ENCODE measurements at regions of chr11 and their contacts with region 1.

Region 1: DNA sequence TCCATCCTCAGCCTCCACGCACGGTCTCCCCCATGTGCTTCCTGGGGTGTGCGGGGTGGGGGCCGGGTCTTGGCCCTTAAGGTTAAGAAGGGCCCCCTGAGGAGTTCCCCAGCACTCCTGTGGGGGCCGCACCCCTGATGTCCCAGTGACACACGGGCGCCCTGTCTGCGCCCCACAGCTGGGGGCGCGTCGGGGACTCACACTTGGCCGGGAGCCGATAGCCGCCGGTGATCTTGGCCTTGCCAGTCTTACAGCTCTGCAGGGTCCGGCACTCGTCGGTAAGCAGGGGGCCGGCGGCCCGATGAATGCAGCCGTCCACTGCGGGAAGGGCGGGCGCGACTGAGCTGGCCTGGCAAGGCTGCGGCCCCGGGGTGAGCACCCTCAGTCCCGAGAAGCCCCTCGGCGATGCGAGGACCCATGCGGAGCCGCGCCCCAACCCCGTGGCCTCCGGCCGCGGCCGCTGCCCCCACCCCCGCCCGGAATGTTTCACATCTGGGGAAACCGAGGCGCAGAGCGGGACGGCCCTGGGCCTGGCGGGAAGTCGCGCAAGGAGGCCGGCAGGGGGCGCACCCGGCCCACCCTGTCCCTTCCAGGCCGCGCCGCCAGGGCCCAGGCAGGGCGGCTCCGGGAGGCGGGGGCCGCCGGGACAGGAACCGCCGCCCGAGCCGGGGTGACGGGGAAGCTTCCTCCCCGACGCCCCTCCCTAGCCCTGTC is 13.9 kb downstream of the OTUB1 start:
- DNase-seq: peak; percentile 62 to 85 (median 77)
- H3K4me3 ChIP-seq: peak overlapping the region; percentile 25
- H3K27ac ChIP-seq: no peak overlapping the region
- H3K4me1 ChIP-seq: peaks cover 8% of the 10 kb centered on the region
- H3K27me3 ChIP-seq: no peaks in the 10 kb centered on the region
- CTCF ChIP-seq: peak; percentile 57 to 94 (median 94)
- EP300 ChIP-seq: no peak
- POLR2A ChIP-seq: no peak

Region 2: DNA sequence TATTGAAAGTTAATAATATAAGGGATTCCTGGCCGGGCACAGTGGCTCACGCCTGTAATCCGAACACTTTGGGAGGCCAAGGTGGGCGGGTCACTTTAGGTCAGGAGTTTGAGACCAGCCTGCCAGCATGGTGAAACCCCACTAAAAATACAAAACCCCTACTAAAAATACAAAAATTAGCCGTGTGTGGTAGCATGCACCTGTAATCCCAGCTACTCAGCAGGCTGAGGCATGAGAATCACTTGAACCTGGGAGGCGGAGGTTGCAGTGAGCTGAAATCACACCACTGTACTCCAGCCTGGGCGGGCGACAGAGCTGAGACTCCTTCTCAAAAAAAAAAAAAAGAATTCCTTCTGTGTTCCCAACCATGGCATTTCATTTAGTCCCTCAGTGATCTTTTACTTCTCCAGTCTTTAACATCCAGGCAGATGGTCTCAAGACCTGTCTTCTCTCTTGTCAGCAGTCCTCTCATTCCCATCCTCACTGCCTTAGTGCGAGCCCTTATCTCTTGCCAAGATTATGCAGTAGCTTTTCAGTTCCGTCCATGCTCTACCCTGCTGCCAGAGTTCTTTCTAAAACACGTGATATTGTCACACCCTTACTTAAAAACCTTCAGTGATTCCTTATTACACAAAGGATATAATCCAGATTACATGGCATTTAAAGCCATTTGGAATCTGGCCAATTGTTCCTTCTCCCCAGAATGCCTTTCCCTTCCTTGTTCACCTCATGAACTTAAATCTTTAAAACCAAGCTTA is 301.0 kb before region 1 on chr11:
- intact Hi-C with region 1: no loop called
- DNase-seq: no peak
- H3K4me3 ChIP-seq: no peak overlapping the region
- H3K27ac ChIP-seq: no peak overlapping the region
- H3K4me1 ChIP-seq: no peaks in the 10 kb centered on the region
- H3K27me3 ChIP-seq: no peaks in the 10 kb centered on the region
- CTCF ChIP-seq: no peak
- EP300 ChIP-seq: no peak
- POLR2A ChIP-seq: no peak

Region 3: GRCh38 chr11:64152841-64153691 is 152.9 kb after region 1 on chr11:
- intact Hi-C with region 1: loop called (anchors 2 to 5 kb)
- DNase-seq: peak; percentile 57 to 84 (median 74)
- H3K4me3 ChIP-seq: no peak overlapping the region
- H3K27ac ChIP-seq: peak overlapping the region in 1 of 2 donors; percentile 11
- H3K4me1 ChIP-seq: peaks cover 15% of the 10 kb centered on the region
- H3K27me3 ChIP-seq: no peaks in the 10 kb centered on the region
- CTCF ChIP-seq: peak; percentile 93 to 98 (median 94)
- EP300 ChIP-seq: no peak
- POLR2A ChIP-seq: no peak

Region 4: DNA sequence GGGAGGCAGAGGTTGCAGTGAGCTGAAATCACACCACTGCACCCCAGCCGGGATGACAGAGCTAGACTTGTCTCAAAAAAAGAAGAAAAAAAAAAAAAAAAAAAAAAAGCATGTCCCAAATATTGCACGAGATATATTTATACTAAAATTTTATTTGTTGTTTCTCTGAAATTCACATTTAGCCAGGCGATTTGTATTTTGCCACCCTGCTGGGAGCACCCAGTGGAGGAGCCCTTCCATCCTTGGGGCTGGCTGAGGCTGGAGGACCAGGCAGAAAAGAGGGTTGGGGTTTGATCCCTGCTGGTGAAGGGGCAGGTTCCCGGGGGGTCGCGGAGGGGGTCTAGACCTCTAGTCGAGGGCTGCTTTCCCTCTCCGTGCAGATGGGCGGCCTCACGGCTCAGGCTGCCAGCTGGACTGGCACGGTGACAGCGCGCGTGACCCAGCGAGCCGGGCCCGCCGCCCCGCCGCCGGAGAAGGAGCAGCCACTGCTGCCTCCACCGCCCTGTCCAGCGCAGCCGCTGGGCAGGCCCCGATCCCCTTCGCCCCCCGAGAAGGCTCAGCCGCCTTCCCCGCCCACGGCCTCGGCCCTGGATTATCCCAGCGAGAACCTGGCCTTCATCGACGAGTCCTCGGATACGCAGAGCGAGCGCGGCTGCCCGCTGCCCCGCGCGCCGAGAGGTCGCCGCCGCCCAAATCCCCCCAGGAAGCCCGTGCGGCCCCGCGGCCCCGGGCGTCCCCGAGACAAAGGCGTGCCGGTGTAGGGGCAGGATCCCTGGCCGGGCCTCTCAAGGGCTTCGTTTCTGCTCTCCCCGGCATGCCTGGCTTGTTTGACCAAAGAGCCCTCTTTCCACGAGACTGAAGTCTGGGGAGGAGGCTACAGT is 299.0 kb after region 1 on chr11:
- intact Hi-C with region 1: loop called in 1 of 4 experiments (anchors 10 kb)
- DNase-seq: peak; percentile 58 to 78 (median 67)
- H3K4me3 ChIP-seq: no peak overlapping the region
- H3K27ac ChIP-seq: no peak overlapping the region
- H3K4me1 ChIP-seq: peaks cover 4% of the 10 kb centered on the region
- H3K27me3 ChIP-seq: peaks cover 10% of the 10 kb centered on the region
- CTCF ChIP-seq: no peak
- EP300 ChIP-seq: no peak
- POLR2A ChIP-seq: no peak